Posterior vena cava (tissue), 2 donors: ENCODE measurements at regions of chr19 and their contacts with region 1.

Region 1: DNA sequence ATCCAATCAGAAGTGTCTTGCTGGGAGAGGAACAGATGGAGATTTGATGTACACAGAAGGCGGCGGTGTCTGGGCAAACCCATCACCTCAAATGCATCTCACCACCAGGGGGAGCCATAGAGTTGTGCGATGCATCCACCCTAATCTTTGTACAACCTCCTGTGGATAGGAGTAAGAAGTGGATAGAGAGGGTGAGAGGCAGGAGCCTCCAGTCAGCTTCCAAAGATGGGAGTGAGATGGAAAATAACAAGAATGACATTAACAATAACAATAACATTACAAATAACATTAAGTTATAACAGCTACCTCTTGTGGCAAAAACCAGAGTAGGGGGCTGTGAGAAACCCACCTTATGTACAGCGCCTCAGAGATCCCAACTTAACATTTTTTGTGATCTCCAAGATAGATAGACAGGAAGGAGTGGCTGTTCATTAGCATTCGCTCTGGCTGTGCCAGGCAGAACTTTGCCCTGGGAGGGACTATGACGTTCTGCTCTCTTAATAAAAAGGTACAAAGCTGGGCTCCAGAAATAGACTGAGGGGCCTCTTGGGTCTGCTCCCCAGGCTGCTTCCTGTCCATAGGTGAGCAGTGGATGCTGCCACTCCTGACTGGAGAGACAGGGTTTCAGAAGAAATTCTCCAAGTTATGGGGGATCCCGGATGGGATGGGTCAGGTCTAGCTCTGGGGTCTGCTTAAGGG is 5.2 kb upstream of the CEACAM18 start:
- DNase-seq: peak; percentile 89

Region 2: GRCh38 chr19:51372649-51373504 is 100.3 kb before region 1 on chr19 and contains the start of gene NKG7:
- intact Hi-C with region 1: no loop called
- DNase-seq: no peak
- total RNA-seq, gene NKG7: 3.0 to 4.8 TPM

Region 3: DNA sequence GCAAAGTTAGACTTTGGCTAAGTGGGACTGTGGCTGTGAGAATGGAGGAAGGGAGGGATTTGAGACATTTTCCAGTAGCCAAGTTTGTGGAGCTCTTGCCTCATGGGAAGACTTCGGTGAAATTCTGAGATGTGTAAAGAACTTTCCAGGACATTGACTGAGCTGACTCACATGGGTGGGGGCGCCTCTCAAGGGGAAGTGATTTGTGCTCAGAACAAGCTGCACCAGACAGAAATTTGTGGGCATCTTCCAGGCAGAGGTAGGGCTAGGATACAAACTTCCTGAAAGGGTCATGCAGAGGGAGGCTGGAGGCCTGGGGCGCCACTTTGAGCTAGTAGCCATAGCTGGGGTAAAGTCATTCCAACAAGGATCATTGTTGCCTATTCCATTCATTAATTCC is 46.0 kb before region 1 on chr19:
- intact Hi-C with region 1: loop called in 1 of 2 experiments (anchors 2 kb)
- DNase-seq: no peak

Region 4: GRCh38 chr19:51511353-51511752 is 38.2 kb after region 1 on chr19:
- intact Hi-C with region 1: no loop called
- DNase-seq: no peak

Region 5: GRCh38 chr19:51651216-51651846 is 178.2 kb after region 1 on chr19:
- intact Hi-C with region 1: loop called (anchors 5 to 10 kb)
- DNase-seq: no peak

Region 6: DNA sequence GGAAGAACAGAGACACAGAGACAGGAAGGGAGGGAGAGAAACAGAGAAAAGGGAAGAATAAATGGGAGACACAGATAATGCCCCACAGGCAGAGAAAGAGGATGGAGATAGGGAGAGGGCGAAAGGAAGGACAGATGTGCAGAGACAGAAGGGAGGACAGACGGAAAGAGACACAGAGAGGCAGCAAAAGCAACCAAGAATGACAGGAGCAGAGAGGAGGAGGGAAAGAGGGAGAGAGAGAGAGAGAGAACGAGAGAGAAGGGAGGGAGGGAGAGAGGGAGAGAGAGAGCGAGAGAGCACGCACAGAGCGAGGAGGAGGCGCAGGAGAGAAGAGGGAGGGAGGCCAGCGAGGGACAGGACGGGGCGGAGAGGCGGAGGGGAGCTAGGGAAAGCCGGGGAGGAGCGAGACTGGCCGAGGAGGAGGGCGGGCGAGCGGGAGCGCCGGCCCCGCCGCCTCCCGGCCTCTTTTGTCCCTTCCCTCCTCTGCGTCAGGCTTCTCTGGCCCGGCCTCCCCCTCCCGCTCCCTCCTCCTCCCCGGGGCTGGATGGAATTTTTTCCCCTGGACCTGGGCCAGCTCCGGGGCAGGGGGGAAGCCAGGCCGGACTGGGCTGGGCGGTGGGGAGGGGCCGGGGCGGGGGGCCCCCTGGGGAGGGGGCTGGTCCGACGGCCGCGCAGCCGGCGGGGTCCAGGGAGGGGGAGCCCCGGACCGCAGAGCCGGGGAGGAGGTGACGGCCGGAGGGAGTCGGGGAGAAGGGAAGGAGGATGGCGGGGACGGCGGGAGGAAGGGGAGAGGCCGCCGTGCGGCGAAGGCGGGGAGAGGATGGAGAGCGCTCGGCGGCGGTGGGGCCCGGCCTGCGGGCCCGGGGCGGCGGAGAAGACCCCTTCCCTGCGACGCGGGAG is 215.8 kb after region 1 on chr19:
- intact Hi-C with region 1: no loop called
- DNase-seq: peak; percentile 97

Region 7: GRCh38 chr19:51777570-51778462 is 304.7 kb after region 1 on chr19:
- intact Hi-C with region 1: loop called in 1 of 2 experiments (anchors 10 kb)
- DNase-seq: peak; percentile 86